Activated CD4-positive, alpha-beta T cell treated with anti-CD3 and anti-CD28 coated beads, Interleukin-2, amount 10 ng/mL, durations not matched to agents 24 days and 14 days (primary cell): ENCODE measurements at regions of chr6 and their contacts with region 1.

Region 1: GRCh38 chr6:129517291-129517690 is 192.7 kb downstream of the ARHGAP18 start:
- DNase-seq: no peak
- H3K4me3 Mint-ChIP-seq: no peak overlapping the region
- H3K27ac Mint-ChIP-seq: no peak overlapping the region
- H3K4me1 Mint-ChIP-seq: peaks cover 2% of the 10 kb centered on the region
- H3K27me3 Mint-ChIP-seq: no peaks in the 10 kb centered on the region

Region 2: DNA sequence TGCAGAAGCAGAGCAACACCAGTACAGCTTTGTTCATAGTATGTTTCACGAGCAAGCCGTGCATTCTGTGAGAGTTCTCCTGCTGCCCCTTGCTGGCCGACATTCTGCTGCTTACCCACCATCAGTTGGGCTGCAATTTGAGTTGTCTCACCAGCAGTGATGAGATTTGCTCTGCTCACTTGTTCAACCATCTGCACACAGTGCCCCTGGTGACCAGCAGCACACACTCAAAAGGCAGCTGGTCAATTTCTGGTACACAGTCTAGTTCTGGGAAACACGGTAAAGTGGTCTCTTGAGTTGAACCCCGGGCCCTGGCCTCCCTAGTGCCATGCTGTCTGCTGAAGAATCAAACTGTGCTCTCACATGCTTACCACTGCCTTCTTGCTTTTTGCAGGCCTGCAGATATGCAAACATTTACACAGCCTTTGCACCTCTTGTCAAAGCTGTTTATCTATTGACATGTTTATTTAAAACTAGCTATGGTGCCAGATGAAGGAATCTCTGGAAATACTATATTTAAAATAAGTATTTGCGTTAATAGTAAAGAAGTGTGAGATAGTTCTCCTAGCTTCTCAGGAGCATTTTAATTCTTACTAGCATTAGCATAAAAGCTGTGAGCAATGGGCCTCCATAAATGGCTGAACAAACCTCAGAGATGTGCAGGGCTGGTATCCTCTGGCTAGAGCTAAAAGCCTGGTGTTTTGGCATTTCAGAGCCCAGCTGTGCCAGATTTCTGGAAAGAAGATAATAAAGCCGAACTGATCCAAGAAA is 41.6 kb before region 1 on chr6:
- intact Hi-C with region 1: loop called (anchors 1 kb)
- DNase-seq: no peak
- H3K4me3 Mint-ChIP-seq: no peak overlapping the region
- H3K27ac Mint-ChIP-seq: no peak overlapping the region
- H3K4me1 Mint-ChIP-seq: peaks cover 4% of the 10 kb centered on the region
- H3K27me3 Mint-ChIP-seq: no peaks in the 10 kb centered on the region

Region 3: DNA sequence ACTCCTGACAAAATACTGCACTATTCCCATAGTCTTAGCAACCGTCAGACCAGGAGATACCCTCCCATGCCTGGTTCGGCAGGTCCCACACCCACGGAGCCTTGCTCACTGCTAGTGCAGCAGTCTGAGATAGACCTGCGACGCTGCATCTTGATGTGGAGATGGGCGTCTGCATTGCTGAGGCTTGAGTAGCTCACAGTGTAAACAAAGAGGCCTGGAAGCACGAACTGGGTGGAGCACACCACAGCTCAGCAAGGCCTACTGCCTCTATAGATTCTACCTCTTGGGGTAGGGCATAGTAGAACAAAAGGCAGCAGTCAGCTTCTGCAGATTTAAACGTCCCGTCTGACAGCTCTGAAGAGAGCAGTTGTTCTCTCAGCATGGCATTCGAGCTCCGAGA is 318.4 kb after region 1 on chr6:
- intact Hi-C with region 1: no loop called
- DNase-seq: no peak
- H3K4me3 Mint-ChIP-seq: no peak overlapping the region
- H3K27ac Mint-ChIP-seq: no peak overlapping the region
- H3K4me1 Mint-ChIP-seq: no peaks in the 10 kb centered on the region
- H3K27me3 Mint-ChIP-seq: peaks cover 16% of the 10 kb centered on the region